ENCODE measurements at regions of chr14 and their contacts with region 1.

Region 1: DNA sequence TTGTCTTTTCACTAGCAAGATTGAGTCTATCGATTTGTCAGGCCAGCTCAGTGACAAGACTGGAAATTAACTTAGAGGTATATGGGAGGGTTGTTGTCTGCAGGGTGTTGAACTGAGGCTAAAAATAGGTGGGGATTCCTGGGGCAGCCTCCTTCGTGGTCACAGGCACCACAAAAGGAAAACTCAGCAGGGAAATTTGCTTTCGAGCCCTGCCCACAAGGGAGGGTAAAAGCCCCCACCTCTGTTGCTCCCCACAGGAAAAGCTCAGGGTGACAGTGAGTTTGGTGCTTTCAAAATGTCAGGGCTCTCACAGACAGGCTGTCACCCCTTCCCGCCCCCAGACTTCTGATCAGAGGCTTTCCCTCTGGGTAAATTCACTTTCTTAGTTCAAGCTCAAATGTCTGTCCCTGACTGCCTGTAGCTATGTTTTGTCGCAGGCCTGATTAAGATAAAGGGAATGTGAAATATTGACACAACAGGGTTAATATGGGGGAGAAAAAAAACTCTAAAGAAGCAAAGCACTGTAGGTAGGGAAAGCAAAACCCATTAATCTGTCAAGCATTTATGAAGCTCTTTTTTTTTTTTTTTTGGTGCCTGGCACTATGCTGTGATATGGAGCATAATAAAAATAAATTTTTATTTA is 11.7 kb upstream of the NFKBIA start:
- DNase-seq: peak in 8 of 9 experiments; percentile 35 to 94 (median 62)
- ATAC-seq: peak; percentile 48
- H3K4me3 ChIP-seq: peak overlapping the region; percentile 9 to 15
- H3K4me3 Mint-ChIP-seq: peak overlapping the region; percentile 55
- H3K27ac ChIP-seq: peak overlapping the region; percentile 17 to 85
- H3K27ac Mint-ChIP-seq: peak overlapping the region; percentile 90
- H3K4me1 ChIP-seq: peaks cover 35% of the 10 kb centered on the region
- H3K4me1 Mint-ChIP-seq: peaks cover 44% of the 10 kb centered on the region
- H3K27me3 ChIP-seq: no peaks in the 10 kb centered on the region
- H3K27me3 Mint-ChIP-seq: no peaks in the 10 kb centered on the region
- CTCF ChIP-seq: no peak

Region 2: GRCh38 chr14:34676516-34677222 is 739.6 kb before region 1 on chr14:
- CTCF ChIA-PET with region 1: no interaction called
- POLR2A ChIA-PET with region 1: no interaction called
- intact Hi-C with region 1: loop called (anchors 5 kb)
- DNase-seq: no peak
- ATAC-seq: no peak
- H3K4me3 ChIP-seq: no peak overlapping the region
- H3K4me3 Mint-ChIP-seq: no peak overlapping the region
- H3K27ac ChIP-seq: no peak overlapping the region
- H3K27ac Mint-ChIP-seq: no peak overlapping the region
- H3K4me1 ChIP-seq: no peaks in the 10 kb centered on the region
- H3K4me1 Mint-ChIP-seq: no peaks in the 10 kb centered on the region
- H3K27me3 ChIP-seq: no peaks in the 10 kb centered on the region
- H3K27me3 Mint-ChIP-seq: no peaks in the 10 kb centered on the region
- CTCF ChIP-seq: no peak

Region 3: DNA sequence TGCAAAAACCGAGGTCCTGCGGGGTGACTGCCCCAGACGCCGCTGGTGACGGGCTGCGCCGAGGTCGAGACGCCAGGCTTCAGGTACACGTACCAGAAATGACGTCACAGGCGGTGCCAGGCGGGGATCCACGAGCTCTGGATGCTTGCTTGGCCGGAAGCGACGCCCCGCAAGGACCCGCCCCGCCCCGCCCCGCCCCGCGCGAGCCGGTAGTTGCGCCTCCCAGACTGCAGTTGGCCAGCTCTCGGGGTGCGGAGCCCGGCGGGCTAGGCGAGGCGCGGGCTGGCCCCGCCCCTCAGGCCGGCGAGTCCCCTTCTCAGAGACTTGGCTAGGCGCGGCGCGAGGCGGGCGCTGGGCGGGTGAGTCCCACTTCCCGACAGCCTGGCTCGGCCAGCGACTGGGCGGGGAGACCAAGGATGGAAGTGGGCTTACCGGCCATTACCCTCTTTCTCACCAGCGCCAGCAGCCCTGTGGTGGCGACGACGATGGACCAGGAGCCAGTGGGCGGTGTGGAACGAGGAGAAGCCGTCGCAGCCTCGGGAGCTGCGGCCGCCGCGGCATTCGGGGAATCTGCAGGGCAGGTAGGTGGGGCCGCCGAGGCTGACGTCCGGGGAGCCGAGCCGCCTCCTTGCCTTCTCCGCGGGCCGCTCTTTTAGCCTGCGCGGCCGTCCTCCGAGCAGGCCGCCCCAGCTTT is 370.0 kb before region 1 on chr14 and contains the start of gene FAM177A1:
- CTCF ChIA-PET with region 1: no interaction called
- POLR2A ChIA-PET with region 1: interaction called, 5 read pairs
- intact Hi-C with region 1: loop called in 1 of 2 experiments (anchors 5 kb)
- DNase-seq: peak; percentile 97 to 100 (median 99)
- ATAC-seq: peak; percentile 83
- H3K4me3 ChIP-seq: peak within 1 kb of the TSS; percentile 81 to 96
- H3K4me3 Mint-ChIP-seq: peak within 1 kb of the TSS; percentile 82
- H3K27ac ChIP-seq: peak within 1 kb of the TSS; percentile 96 to 100
- H3K27ac Mint-ChIP-seq: peak within 1 kb of the TSS; percentile 98
- H3K4me1 ChIP-seq: peaks cover 20% of the 10 kb centered on the region
- H3K4me1 Mint-ChIP-seq: peaks cover 28% of the 10 kb centered on the region
- H3K27me3 ChIP-seq: no peaks in the 10 kb centered on the region
- H3K27me3 Mint-ChIP-seq: no peaks in the 10 kb centered on the region
- CTCF ChIP-seq: no peak
- total RNA-seq, gene FAM177A1: 227 to 230 TPM

Region 4: GRCh38 chr14:35229495-35230089 is 186.6 kb before region 1 on chr14:
- CTCF ChIA-PET with region 1: interaction called, 72 read pairs
- POLR2A ChIA-PET with region 1: interaction called, 5 read pairs
- intact Hi-C with region 1: no loop called
- DNase-seq: peak in 2 of 9 experiments; percentile 32 to 59
- ATAC-seq: peak; percentile 58
- H3K4me3 ChIP-seq: no peak overlapping the region
- H3K4me3 Mint-ChIP-seq: no peak overlapping the region
- H3K27ac ChIP-seq: no peak overlapping the region
- H3K27ac Mint-ChIP-seq: no peak overlapping the region
- H3K4me1 ChIP-seq: peaks cover 7% of the 10 kb centered on the region
- H3K4me1 Mint-ChIP-seq: peaks cover 19% of the 10 kb centered on the region
- H3K27me3 ChIP-seq: no peaks in the 10 kb centered on the region
- H3K27me3 Mint-ChIP-seq: no peaks in the 10 kb centered on the region
- CTCF ChIP-seq: peak; percentile 45

Region 5: GRCh38 chr14:35687335-35687939 is 271.2 kb after region 1 on chr14:
- CTCF ChIA-PET with region 1: no interaction called
- POLR2A ChIA-PET with region 1: no interaction called
- intact Hi-C with region 1: loop called in 1 of 2 experiments (anchors 10 kb)
- DNase-seq: peak in 5 of 9 experiments; percentile 3 to 53 (median 24)
- ATAC-seq: peak; percentile 46
- H3K4me3 ChIP-seq: no peak overlapping the region
- H3K4me3 Mint-ChIP-seq: no peak overlapping the region
- H3K27ac ChIP-seq: no peak overlapping the region
- H3K27ac Mint-ChIP-seq: no peak overlapping the region
- H3K4me1 ChIP-seq: no peaks in the 10 kb centered on the region
- H3K4me1 Mint-ChIP-seq: no peaks in the 10 kb centered on the region
- H3K27me3 ChIP-seq: no peaks in the 10 kb centered on the region
- H3K27me3 Mint-ChIP-seq: no peaks in the 10 kb centered on the region
- CTCF ChIP-seq: peak; percentile 73

Measured in CD8-positive, alpha-beta T cell (primary cell).